Activated naive CD4-positive, alpha-beta T cell treated with anti-CD3 and anti-CD28 coated beads, Interleukin-2, amount 10 ng/mL, durations not matched to agents 7 days and 5 days (primary cell): ENCODE measurements at regions of chr14 and their contacts with region 1.

Region 1: GRCh38 chr14:65412032-65412846 is at the start of gene FUT8:
- DNase-seq: peak; percentile 95
- H3K4me3 Mint-ChIP-seq: peak within 1 kb of the TSS; percentile 99
- H3K27ac Mint-ChIP-seq: peak within 1 kb of the TSS; percentile 97
- H3K4me1 Mint-ChIP-seq: peaks cover 41% of the 10 kb centered on the region
- H3K27me3 Mint-ChIP-seq: no peaks in the 10 kb centered on the region

Region 2: DNA sequence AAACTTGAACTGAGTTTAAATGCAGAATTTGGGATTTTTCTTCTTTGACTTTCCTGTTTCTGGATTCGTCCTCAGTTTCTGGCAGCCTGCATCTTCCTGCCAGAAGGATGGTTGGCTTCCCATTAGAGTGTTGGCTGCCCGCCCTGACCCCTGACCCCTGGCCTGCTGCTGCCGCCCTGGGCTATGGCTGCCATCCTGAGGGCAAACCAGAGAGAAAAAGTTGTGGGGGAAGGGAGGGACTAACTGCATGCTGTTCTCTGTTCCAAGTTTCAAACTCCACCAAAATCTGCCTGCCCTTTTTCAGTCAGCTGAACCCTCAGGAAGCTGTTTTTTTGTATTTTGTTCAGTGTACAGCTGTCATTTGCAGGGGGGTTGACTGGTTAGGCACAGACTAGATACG is 377.2 kb before region 1 on chr14:
- CTCF ChIA-PET with region 1: no interaction called
- DNase-seq: no peak
- H3K4me3 Mint-ChIP-seq: no peak overlapping the region
- H3K27ac Mint-ChIP-seq: no peak overlapping the region
- H3K4me1 Mint-ChIP-seq: no peaks in the 10 kb centered on the region
- H3K27me3 Mint-ChIP-seq: no peaks in the 10 kb centered on the region

Region 3: GRCh38 chr14:65164068-65164824 is 248.0 kb before region 1 on chr14:
- CTCF ChIA-PET with region 1: interaction called, 30 read pairs
- DNase-seq: peak; percentile 56
- H3K4me3 Mint-ChIP-seq: no peak overlapping the region
- H3K27ac Mint-ChIP-seq: no peak overlapping the region
- H3K4me1 Mint-ChIP-seq: peaks cover 15% of the 10 kb centered on the region
- H3K27me3 Mint-ChIP-seq: peaks cover 6% of the 10 kb centered on the region

Region 4: DNA sequence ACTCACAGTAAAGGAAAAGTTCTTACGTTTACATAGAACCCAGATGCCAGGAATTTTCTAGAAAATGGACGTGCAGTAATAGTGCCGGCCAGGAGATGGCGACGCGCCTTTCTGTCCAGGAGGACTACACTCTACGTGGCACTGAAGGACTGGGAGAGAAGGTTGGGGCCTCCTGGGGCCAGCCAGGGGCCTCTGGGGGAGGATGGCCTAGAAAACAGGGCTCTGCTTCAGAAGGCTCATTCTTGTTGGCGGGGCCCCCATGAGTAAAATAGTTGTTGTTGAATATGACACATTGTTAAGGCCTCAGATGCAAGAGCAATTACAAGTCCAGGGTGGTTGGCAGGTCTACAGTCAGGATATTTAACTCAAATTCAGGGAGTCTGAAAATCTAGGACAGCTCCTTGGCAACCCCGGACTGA is 189.8 kb before region 1 on chr14:
- CTCF ChIA-PET with region 1: interaction called, 54 read pairs
- DNase-seq: peak; percentile 66
- H3K4me3 Mint-ChIP-seq: no peak overlapping the region
- H3K27ac Mint-ChIP-seq: peak overlapping the region; percentile 30
- H3K4me1 Mint-ChIP-seq: peaks cover 52% of the 10 kb centered on the region
- H3K27me3 Mint-ChIP-seq: peaks cover 4% of the 10 kb centered on the region

Region 5: GRCh38 chr14:65287264-65288131 is 124.7 kb before region 1 on chr14:
- CTCF ChIA-PET with region 1: interaction called, 45 read pairs
- DNase-seq: peak; percentile 65
- H3K4me3 Mint-ChIP-seq: peak overlapping the region; percentile 73
- H3K27ac Mint-ChIP-seq: peak overlapping the region; percentile 96
- H3K4me1 Mint-ChIP-seq: peaks cover 85% of the 10 kb centered on the region
- H3K27me3 Mint-ChIP-seq: no peaks in the 10 kb centered on the region

Region 6: GRCh38 chr14:65446159-65446558 is 33.9 kb after region 1 on chr14:
- CTCF ChIA-PET with region 1: interaction called, 10 read pairs
- DNase-seq: no peak
- H3K4me3 Mint-ChIP-seq: no peak overlapping the region
- H3K27ac Mint-ChIP-seq: no peak overlapping the region
- H3K4me1 Mint-ChIP-seq: peaks cover 31% of the 10 kb centered on the region
- H3K27me3 Mint-ChIP-seq: no peaks in the 10 kb centered on the region

Region 7: DNA sequence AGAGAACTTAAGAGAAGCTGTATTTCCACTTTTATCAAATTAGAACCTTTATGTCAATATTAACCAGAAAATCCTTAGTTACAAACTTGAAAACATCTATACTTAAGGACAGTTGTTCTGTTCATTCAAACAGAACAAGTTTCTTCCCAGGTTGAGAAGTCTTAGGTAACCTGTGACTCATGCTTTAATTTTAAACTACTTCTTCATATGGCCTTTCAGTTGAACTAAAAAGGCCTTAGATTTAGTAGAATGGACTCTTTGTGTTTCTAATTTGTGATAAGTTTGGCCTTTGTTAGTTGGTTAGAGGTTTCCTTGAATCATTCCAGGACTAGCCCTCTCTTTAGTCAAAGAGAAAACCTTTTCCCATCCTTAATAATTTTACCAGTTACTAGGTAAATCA is 274.5 kb after region 1 on chr14:
- CTCF ChIA-PET with region 1: no interaction called
- DNase-seq: no peak
- H3K4me3 Mint-ChIP-seq: no peak overlapping the region
- H3K27ac Mint-ChIP-seq: no peak overlapping the region
- H3K4me1 Mint-ChIP-seq: no peaks in the 10 kb centered on the region
- H3K27me3 Mint-ChIP-seq: no peaks in the 10 kb centered on the region

Region 8: DNA sequence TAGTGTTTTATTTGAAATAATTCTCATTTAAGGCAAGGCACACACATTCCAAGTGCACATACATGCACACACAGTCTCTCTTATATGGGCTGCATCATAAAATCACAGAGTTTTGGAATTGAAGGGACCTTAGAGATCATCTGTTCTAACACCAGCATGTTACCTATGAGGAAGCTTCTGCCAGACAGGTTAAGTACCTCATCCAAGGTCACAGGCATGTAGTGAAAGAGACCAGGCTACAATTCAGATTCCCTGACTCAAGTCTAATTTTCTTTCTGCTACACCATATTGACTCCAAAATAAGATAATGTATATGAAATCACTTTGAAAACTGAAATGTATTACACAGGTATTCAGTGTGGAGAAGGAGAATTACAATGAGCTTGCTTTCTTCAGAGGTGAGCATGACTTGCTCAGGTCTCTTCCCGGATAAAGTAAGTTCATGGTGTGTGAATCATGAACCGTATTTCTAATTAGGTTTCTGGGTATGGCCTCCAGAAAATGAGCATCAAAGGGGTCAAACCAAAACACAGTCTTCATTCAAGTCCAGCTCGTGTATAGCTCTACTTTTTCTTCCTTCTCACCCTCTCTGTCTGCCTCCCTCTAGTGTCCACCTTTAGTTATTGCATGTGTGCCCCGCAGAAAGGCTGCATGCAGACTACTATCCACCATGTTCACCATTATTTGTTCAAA is 412.2 kb after region 1 on chr14:
- CTCF ChIA-PET with region 1: interaction called, 56 read pairs
- DNase-seq: peak; percentile 71
- H3K4me3 Mint-ChIP-seq: no peak overlapping the region
- H3K27ac Mint-ChIP-seq: no peak overlapping the region
- H3K4me1 Mint-ChIP-seq: peaks cover 48% of the 10 kb centered on the region
- H3K27me3 Mint-ChIP-seq: peaks cover 9% of the 10 kb centered on the region

Region 9: GRCh38 chr14:66070509-66071319 is 658.5 kb after region 1 on chr14:
- CTCF ChIA-PET with region 1: interaction called, 39 read pairs
- DNase-seq: peak; percentile 81
- H3K4me3 Mint-ChIP-seq: no peak overlapping the region
- H3K27ac Mint-ChIP-seq: no peak overlapping the region
- H3K4me1 Mint-ChIP-seq: peaks cover 16% of the 10 kb centered on the region
- H3K27me3 Mint-ChIP-seq: peaks cover 17% of the 10 kb centered on the region